Naive thymus-derived CD4-positive, alpha-beta T cell (primary cell): ENCODE measurements at regions of chr1 and their contacts with region 1.

Region 1: GRCh38 chr1:44799770-44800584 is at the start of gene PLK3:
- DNase-seq: peak; percentile 93 to 99 (median 98)
- ATAC-seq: peak; percentile 92
- H3K4me3 ChIP-seq: peak within 1 kb of the TSS; percentile 66
- H3K4me3 Mint-ChIP-seq: peak within 1 kb of the TSS; percentile 85 to 98 (median 93)
- H3K27ac ChIP-seq: peak within 1 kb of the TSS; percentile 94
- H3K27ac Mint-ChIP-seq: peak within 1 kb of the TSS; percentile 84 to 99 (median 98)
- H3K4me1 ChIP-seq: peaks cover 17 to 24% of the 10 kb centered on the region in 2 donors
- H3K4me1 Mint-ChIP-seq: peaks cover 19 to 43% (median 33%) of the 10 kb centered on the region in 7 donors
- H3K27me3 ChIP-seq: no peaks in the 10 kb centered on the region
- H3K27me3 Mint-ChIP-seq: no peaks in the 10 kb centered on the region
- total RNA-seq, gene PLK3: 92.8 to 456 (median 142) TPM

Region 2: DNA sequence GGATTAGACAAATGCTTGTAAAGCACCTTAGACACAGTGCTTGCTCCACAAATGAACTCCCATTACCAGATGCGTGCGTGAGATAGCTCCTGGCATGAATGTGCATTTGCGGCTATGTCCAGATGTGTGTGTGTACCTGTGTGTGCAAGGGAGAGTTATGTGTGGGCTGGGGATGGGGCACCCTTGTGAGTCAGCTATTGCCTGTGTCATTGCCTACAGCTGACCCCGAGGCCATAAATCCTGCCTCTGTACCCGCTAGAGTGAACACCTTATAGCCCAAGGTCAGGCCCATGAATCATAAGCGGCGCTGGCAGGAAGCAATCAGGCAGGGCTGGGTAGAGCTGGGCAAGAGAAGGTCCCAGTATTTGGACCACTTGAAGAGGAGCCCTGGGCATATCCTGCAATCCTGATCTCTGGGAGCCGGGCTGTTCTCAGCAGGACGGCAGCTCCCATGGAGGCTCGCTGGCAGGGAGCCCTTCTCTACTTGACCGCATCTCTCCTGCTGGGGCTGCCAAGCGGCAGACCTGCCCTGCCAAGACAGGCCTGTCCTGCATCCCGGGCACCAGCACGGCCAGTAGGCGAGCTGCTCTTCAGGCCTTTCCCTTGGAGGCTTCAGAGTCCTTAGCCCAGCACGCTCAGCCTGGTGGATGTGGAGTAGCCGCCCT is 212.0 kb before region 1 on chr1:
- CTCF ChIA-PET with region 1: no interaction called
- POLR2A ChIA-PET with region 1: no interaction called
- intact Hi-C with region 1: no loop called
- DNase-seq: no peak
- ATAC-seq: no peak
- H3K4me3 ChIP-seq: no peak overlapping the region
- H3K4me3 Mint-ChIP-seq: no peak overlapping the region
- H3K27ac ChIP-seq: no peak overlapping the region
- H3K27ac Mint-ChIP-seq: no peak overlapping the region
- H3K4me1 ChIP-seq: no peaks in the 10 kb centered on the region
- H3K4me1 Mint-ChIP-seq: peaks cover 0 to 4% (median 0%) of the 10 kb centered on the region in 7 donors
- H3K27me3 ChIP-seq: no peaks in the 10 kb centered on the region
- H3K27me3 Mint-ChIP-seq: peaks cover 0 to 2% (median 0%) of the 10 kb centered on the region in 5 donors

Region 3: GRCh38 chr1:44739361-44740178 is 60.4 kb before region 1 on chr1 and contains the start of gene KIF2C:
- CTCF ChIA-PET with region 1: no interaction called
- POLR2A ChIA-PET with region 1: interaction called, 5 read pairs
- intact Hi-C with region 1: loop called in 1 of 2 experiments (anchors 2 kb)
- DNase-seq: peak; percentile 87 to 96 (median 94)
- ATAC-seq: peak; percentile 100
- H3K4me3 ChIP-seq: peak within 1 kb of the TSS; percentile 79
- H3K4me3 Mint-ChIP-seq: peak within 1 kb of the TSS; percentile 84 to 99 (median 94)
- H3K27ac ChIP-seq: peak within 1 kb of the TSS; percentile 84
- H3K27ac Mint-ChIP-seq: peak within 1 kb of the TSS; percentile 86 to 97 (median 95)
- H3K4me1 ChIP-seq: peaks cover 5 to 7% of the 10 kb centered on the region in 2 donors
- H3K4me1 Mint-ChIP-seq: peaks cover 9 to 39% (median 19%) of the 10 kb centered on the region in 7 donors
- H3K27me3 ChIP-seq: no peaks in the 10 kb centered on the region
- H3K27me3 Mint-ChIP-seq: no peaks in the 10 kb centered on the region
- total RNA-seq, gene KIF2C: 0.32 to 69.3 (median 1.1) TPM

Region 4: GRCh38 chr1:44812822-44813543 is 13.0 kb after region 1 on chr1:
- CTCF ChIA-PET with region 1: interaction called, 44 read pairs
- POLR2A ChIA-PET with region 1: interaction called, 709 read pairs
- intact Hi-C with region 1: loop called (anchors 1 kb)
- DNase-seq: no peak
- ATAC-seq: no peak
- H3K4me3 ChIP-seq: peak overlapping the region; percentile 66
- H3K4me3 Mint-ChIP-seq: peak overlapping the region in 9 of 10 donors; percentile 45 to 94 (median 89)
- H3K27ac ChIP-seq: peak overlapping the region; percentile 81
- H3K27ac Mint-ChIP-seq: peak overlapping the region in 8 of 9 donors; percentile 95 to 100 (median 99)
- H3K4me1 ChIP-seq: peaks cover 45 to 56% of the 10 kb centered on the region in 2 donors
- H3K4me1 Mint-ChIP-seq: peaks cover 52 to 77% (median 63%) of the 10 kb centered on the region in 7 donors
- H3K27me3 ChIP-seq: no peaks in the 10 kb centered on the region
- H3K27me3 Mint-ChIP-seq: peaks cover 0 to 3% (median 0%) of the 10 kb centered on the region in 5 donors

Region 5: DNA sequence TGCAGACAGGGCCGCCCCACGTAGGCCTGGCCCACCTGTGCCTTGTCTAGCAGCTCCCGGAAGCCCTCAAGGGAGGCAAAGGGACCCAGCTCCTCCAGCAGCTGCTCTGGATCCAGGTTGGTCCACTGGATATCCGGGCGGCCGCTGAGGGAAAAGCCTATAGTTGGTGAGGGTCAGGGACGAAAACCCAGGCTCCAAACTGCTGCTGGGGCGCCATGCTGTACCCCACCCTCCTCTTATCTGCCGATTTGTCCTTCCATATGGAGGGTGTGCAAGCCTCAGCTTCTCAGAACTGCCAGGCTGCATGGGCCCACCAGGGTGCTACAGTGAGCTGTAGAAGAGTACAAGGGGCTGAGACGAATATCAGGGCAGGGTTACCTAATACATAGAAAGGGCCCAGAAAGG is 30.9 kb after region 1 on chr1:
- CTCF ChIA-PET with region 1: interaction called, 11 read pairs
- POLR2A ChIA-PET with region 1: interaction called, 709 read pairs
- intact Hi-C with region 1: loop called in 1 of 2 experiments (anchors 2 kb)
- DNase-seq: no peak
- ATAC-seq: no peak
- H3K4me3 ChIP-seq: no peak overlapping the region
- H3K4me3 Mint-ChIP-seq: no peak overlapping the region
- H3K27ac ChIP-seq: no peak overlapping the region
- H3K27ac Mint-ChIP-seq: peak overlapping the region in 1 of 9 donors; percentile 73
- H3K4me1 ChIP-seq: no peaks in the 10 kb centered on the region
- H3K4me1 Mint-ChIP-seq: peaks cover 5 to 16% (median 5%) of the 10 kb centered on the region in 7 donors
- H3K27me3 ChIP-seq: no peaks in the 10 kb centered on the region
- H3K27me3 Mint-ChIP-seq: no peaks in the 10 kb centered on the region

Region 6: GRCh38 chr1:44985747-44986359 is 185.9 kb after region 1 on chr1:
- CTCF ChIA-PET with region 1: interaction called, 3 read pairs
- POLR2A ChIA-PET with region 1: interaction called, 5 read pairs
- intact Hi-C with region 1: loop called in 1 of 2 experiments (anchors 2 kb)
- DNase-seq: no peak
- ATAC-seq: no peak
- H3K4me3 ChIP-seq: peak overlapping the region; percentile 77
- H3K4me3 Mint-ChIP-seq: peak overlapping the region; percentile 90 to 100 (median 98)
- H3K27ac ChIP-seq: peak overlapping the region; percentile 68
- H3K27ac Mint-ChIP-seq: peak overlapping the region; percentile 75 to 99 (median 92)
- H3K4me1 ChIP-seq: peaks cover 8 to 13% of the 10 kb centered on the region in 2 donors
- H3K4me1 Mint-ChIP-seq: peaks cover 7 to 39% (median 23%) of the 10 kb centered on the region in 7 donors
- H3K27me3 ChIP-seq: no peaks in the 10 kb centered on the region
- H3K27me3 Mint-ChIP-seq: no peaks in the 10 kb centered on the region